Heart left ventricle (tissue), 16 donors: ENCODE measurements at regions of chr20 and their contacts with region 1.

Region 1: GRCh38 chr20:23265226-23265625 is 85.4 kb upstream of the NXT1 start:
- DNase-seq: no peak
- ATAC-seq: peak in 1 of 4 donors; percentile 12
- H3K4me3 ChIP-seq: no peak overlapping the region
- H3K27ac ChIP-seq: no peak overlapping the region
- H3K4me1 ChIP-seq: peaks cover 0 to 13% (median 9%) of the 10 kb centered on the region in 12 donors
- H3K27me3 ChIP-seq: no peaks in the 10 kb centered on the region
- CTCF ChIP-seq: no peak
- POLR2A ChIP-seq: no peak

Region 2: GRCh38 chr20:23302386-23302785 is 37.2 kb after region 1 on chr20:
- intact Hi-C with region 1: loop called in 1 of 10 experiments (anchors 5 kb)
- DNase-seq: no peak
- ATAC-seq: no peak
- H3K4me3 ChIP-seq: no peak overlapping the region
- H3K27ac ChIP-seq: no peak overlapping the region
- H3K4me1 ChIP-seq: no peaks in the 10 kb centered on the region
- H3K27me3 ChIP-seq: no peaks in the 10 kb centered on the region
- CTCF ChIP-seq: no peak
- POLR2A ChIP-seq: no peak

Region 3: DNA sequence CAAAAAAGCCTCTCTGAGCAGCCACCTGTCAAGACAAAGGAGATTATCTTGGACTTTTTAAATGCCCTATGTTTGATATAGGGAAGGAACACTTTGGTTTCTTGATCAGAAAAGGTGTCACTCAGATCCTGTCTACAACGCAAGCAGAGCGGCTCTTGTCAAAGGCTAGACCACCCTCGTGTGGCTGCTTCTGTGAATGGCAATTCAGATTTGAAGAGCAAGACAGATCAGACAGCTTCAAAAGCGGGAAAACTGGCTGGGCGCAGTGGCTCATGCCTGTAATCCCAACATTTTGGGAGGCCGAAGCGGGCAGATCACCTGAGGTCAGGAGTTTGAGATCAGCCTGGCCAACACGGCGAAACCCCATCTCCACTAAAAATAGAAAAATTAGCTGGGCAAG is 75.3 kb after region 1 on chr20:
- intact Hi-C with region 1: no loop called
- DNase-seq: peak; percentile 60 to 74 (median 72)
- ATAC-seq: peak in 3 of 4 donors; percentile 84 to 89 (median 87)
- H3K4me3 ChIP-seq: no peak overlapping the region
- H3K27ac ChIP-seq: no peak overlapping the region
- H3K4me1 ChIP-seq: peaks cover 0 to 5% (median 1%) of the 10 kb centered on the region in 12 donors
- H3K27me3 ChIP-seq: no peaks in the 10 kb centered on the region
- CTCF ChIP-seq: peak; percentile 52 to 86 (median 77)
- POLR2A ChIP-seq: no peak

Region 4: DNA sequence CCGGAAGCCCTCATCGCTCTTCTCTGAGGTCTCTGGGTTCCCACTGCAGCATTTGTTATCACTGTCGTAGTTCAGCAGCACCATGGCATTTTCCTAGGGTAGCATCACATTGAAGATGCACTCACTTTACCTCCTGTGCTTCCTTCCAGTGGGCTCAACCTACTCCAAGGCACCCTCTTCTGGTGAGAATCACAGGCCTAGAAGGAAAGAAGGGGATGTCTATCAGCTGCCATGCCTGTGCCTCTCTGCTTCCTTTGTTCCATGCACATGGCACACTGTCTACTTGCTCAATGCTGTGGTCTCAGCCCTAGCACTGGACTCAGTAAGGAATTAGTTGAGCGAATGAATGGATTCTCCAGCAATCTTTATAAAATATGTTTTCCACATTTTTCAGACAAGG is 401.0 kb after region 1 on chr20:
- intact Hi-C with region 1: no loop called
- DNase-seq: no peak
- ATAC-seq: no peak
- H3K4me3 ChIP-seq: no peak overlapping the region
- H3K27ac ChIP-seq: peak overlapping the region in 3 of 12 donors; percentile 4 to 20 (median 17)
- H3K4me1 ChIP-seq: peaks cover 0 to 12% (median 1%) of the 10 kb centered on the region in 12 donors
- H3K27me3 ChIP-seq: no peaks in the 10 kb centered on the region
- CTCF ChIP-seq: peak in 1 of 12 donors; percentile 13
- POLR2A ChIP-seq: no peak